Activated CD4-positive, alpha-beta memory T cell treated with anti-CD3 and anti-CD28 coated beads for 36 hours (primary cell): ENCODE measurements at regions of chr6 and their contacts with region 1.

Region 1: GRCh38 chr6:8102122-8102958 is at the start of gene EEF1E1:
- DNase-seq: peak; percentile 99
- H3K4me3 Mint-ChIP-seq: peak within 1 kb of the TSS; percentile 87
- H3K27ac Mint-ChIP-seq: peak within 1 kb of the TSS; percentile 81
- H3K4me1 Mint-ChIP-seq: peaks cover 32% of the 10 kb centered on the region
- H3K27me3 Mint-ChIP-seq: peaks cover 14% of the 10 kb centered on the region
- total RNA-seq, gene EEF1E1: 60.9 to 62.5 TPM

Region 2: GRCh38 chr6:7910654-7911344 is 191.5 kb before region 1 on chr6 and contains the start of gene TXNDC5:
- CTCF ChIA-PET with region 1: no interaction called
- POLR2A ChIA-PET with region 1: interaction called, 5 read pairs
- intact Hi-C with region 1: loop called (anchors 2 kb)
- DNase-seq: peak; percentile 77
- H3K4me3 Mint-ChIP-seq: peak within 1 kb of the TSS; percentile 77
- H3K27ac Mint-ChIP-seq: no peak within 1 kb of the TSS
- H3K4me1 Mint-ChIP-seq: peaks cover 18% of the 10 kb centered on the region
- H3K27me3 Mint-ChIP-seq: peaks cover 1% of the 10 kb centered on the region
- total RNA-seq, gene TXNDC5: 59.6 to 64.5 TPM

Region 3: GRCh38 chr6:8219352-8219943 is 117.1 kb after region 1 on chr6:
- CTCF ChIA-PET with region 1: interaction called, 10 read pairs
- POLR2A ChIA-PET with region 1: no interaction called
- intact Hi-C with region 1: no loop called
- DNase-seq: peak; percentile 40
- H3K4me3 Mint-ChIP-seq: no peak overlapping the region
- H3K27ac Mint-ChIP-seq: no peak overlapping the region
- H3K4me1 Mint-ChIP-seq: no peaks in the 10 kb centered on the region
- H3K27me3 Mint-ChIP-seq: peaks cover 7% of the 10 kb centered on the region

Region 4: DNA sequence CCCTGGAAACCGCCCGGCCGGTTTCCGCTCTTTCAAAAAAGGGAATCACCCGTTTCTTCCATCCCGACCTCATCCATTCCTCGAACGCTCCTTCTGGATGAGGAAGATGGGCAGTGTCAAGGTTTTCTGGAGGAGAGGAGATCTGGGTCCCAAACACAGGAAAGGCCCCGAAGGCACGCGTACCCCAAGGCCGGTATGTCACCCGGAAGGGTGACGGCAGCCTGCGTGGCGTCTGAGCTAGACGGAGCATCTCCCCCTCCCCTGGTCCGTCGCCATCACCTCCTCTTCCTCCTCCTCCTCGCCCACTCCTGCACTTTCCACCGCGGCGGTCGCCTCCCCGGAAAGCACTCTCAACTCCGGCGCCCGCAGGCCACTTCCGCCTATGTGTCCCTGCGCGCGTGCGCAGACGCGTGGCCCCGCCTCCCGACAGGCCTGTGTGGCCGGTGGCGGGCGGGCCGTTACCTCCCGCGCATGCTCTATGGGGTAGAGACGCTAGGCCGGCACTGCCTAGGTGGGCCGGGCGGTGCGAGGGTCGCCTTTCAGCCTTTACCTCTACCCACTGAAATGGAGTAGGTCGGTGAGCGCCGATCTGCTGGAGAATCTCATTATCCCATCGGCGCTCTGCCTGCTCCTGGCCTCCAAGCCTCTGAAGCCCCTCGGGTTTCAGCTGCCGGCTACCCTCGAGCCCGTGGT is 333.0 kb after region 1 on chr6 and contains the start of gene SLC35B3:
- CTCF ChIA-PET with region 1: no interaction called
- POLR2A ChIA-PET with region 1: no interaction called
- intact Hi-C with region 1: loop called (anchors 1 kb)
- DNase-seq: peak; percentile 98
- H3K4me3 Mint-ChIP-seq: peak within 1 kb of the TSS; percentile 93
- H3K27ac Mint-ChIP-seq: peak within 1 kb of the TSS; percentile 96
- H3K4me1 Mint-ChIP-seq: peaks cover 28% of the 10 kb centered on the region
- H3K27me3 Mint-ChIP-seq: no peaks in the 10 kb centered on the region
- total RNA-seq, gene SLC35B3: 7.6 to 7.9 TPM